Psoas muscle (tissue), 8 donors: ENCODE measurements at regions of chr4 and their contacts with region 1.

Region 1: DNA sequence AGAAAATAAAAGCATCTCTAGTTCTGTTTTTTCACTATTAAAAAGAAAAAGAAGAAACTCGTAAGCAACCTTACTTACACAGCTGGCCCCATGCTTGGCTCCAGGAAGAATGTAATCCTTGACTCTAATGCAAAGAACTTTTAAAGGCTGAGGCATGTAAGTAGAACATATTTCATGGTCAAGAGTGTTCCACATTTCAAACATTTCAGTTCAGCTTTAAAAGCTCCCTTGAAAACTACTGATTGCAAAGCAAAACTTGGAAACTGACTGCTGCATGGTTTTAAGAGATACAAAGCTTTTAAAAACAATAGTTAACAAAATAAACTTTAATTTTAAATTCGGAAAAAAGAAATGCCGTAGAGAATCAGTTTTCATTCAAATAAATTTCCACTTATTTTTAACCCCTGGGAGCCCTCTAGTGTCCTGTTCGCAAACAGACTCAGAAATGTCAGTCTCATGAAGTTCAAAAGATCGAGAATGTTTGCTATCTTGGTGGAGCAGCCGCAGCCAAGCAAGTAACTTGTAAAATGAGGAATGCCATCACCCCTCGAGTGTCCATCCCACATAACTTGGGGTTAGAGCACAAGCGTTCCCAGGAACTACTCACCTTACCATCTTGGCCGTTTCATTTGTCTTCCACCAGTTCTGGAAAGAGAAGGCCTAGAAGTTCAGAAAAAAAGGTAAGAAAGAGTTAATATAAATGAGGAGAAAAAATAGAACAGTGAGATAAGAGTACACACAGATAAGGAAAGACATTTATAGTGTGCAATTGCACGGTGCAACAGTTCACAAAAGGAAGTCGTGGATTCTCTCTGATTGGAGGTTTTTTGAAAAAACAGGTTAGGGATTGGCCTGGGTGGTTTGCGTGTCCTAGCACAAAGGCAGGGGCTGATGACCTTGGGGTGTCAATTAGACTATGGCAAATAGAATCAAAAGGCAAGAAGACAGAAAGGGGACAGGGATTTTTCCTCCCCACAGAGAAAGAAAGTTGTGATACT is at the start of gene GASK1B:
- DNase-seq: no peak
- ATAC-seq: peak in 1 of 4 donors; percentile 52
- H3K4me3 ChIP-seq: peak within 1 kb of the TSS; percentile 65
- H3K27ac ChIP-seq: peak within 1 kb of the TSS; percentile 56
- H3K4me1 ChIP-seq: peaks cover 12% of the 10 kb centered on the region
- H3K27me3 ChIP-seq: peaks cover 0 to 4% (median 0%) of the 10 kb centered on the region in 3 donors
- CTCF ChIP-seq: peak; percentile 59
- total RNA-seq, gene GASK1B: 5.3 to 16.7 (median 8.0) TPM

Region 2: DNA sequence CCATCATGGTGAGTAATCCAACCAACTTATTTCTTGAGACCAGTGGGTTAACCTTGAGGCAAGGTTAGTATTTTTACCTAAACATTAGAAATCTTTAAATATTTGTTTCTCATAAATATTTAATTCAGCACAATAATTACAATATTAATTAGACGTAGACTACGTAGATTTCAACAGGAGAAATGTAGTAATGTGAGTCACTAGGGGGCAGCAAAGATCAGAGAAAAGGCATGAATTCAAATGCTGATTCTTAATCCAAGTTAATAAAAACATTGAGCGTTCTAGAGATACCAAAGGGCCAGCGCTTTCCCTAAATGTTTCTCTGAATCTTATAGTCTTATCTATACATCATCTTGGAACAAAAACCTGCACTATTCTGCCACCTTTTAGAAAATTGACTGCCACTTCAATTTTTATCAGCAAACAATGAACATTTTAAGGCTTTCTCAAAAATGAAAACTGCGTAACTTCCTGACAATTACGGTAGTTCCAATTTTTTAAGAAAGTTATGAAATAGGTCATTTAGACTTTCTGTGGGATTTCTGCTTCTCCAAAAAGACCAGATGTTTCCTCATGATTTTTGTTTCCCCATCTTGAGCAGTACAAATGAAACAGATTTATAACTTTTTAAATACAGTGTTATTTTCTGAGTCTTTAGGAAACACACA is 180.4 kb before region 1 on chr4:
- intact Hi-C with region 1: loop called (anchors 2 to 5 kb)
- DNase-seq: no peak
- ATAC-seq: peak in 3 of 4 donors; percentile 40 to 78 (median 59)
- H3K4me3 ChIP-seq: peak overlapping the region; percentile 49
- H3K27ac ChIP-seq: peak overlapping the region; percentile 39
- H3K4me1 ChIP-seq: no peaks in the 10 kb centered on the region
- H3K27me3 ChIP-seq: no peaks in the 10 kb centered on the region
- CTCF ChIP-seq: peak; percentile 69

Region 3: GRCh38 chr4:158006990-158007389 is 165.6 kb before region 1 on chr4:
- intact Hi-C with region 1: loop called in 1 of 2 experiments (anchors 5 kb)
- DNase-seq: no peak
- ATAC-seq: peak in 2 of 4 donors; percentile 19 to 54
- H3K4me3 ChIP-seq: no peak overlapping the region
- H3K27ac ChIP-seq: no peak overlapping the region
- H3K4me1 ChIP-seq: peaks cover 6% of the 10 kb centered on the region
- H3K27me3 ChIP-seq: no peaks in the 10 kb centered on the region
- CTCF ChIP-seq: no peak

Region 4: GRCh38 chr4:158139086-158139485 is 33.5 kb before region 1 on chr4:
- intact Hi-C with region 1: no loop called
- DNase-seq: no peak
- ATAC-seq: no peak
- H3K4me3 ChIP-seq: no peak overlapping the region
- H3K27ac ChIP-seq: no peak overlapping the region
- H3K4me1 ChIP-seq: no peaks in the 10 kb centered on the region
- H3K27me3 ChIP-seq: no peaks in the 10 kb centered on the region
- CTCF ChIP-seq: no peak

Region 5: DNA sequence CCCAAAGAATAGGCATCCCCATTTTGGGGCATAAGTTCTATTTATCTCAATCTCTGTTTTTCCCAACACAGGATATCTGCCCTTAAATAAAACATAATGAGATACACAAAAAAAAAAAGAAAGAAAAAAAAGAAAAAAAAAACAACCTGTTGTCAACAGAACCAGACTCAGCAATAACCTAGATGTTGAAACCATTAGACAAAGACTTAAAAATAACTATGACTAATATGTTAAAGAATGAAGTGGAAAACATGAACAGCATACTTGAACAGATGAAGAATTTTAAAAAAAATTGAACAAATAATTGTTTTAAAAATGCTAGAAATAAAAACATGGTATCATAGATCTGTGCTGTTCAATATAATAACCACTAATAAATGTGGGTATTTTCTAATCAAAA is 255.7 kb after region 1 on chr4:
- intact Hi-C with region 1: no loop called
- DNase-seq: no peak
- ATAC-seq: no peak
- H3K4me3 ChIP-seq: no peak overlapping the region
- H3K27ac ChIP-seq: no peak overlapping the region
- H3K4me1 ChIP-seq: no peaks in the 10 kb centered on the region
- H3K27me3 ChIP-seq: no peaks in the 10 kb centered on the region
- CTCF ChIP-seq: no peak

Region 6: GRCh38 chr4:158817562-158818296 is 645.2 kb after region 1 on chr4:
- intact Hi-C with region 1: no loop called
- DNase-seq: no peak
- ATAC-seq: no peak
- H3K4me3 ChIP-seq: no peak overlapping the region
- H3K27ac ChIP-seq: peak overlapping the region; percentile 85
- H3K4me1 ChIP-seq: peaks cover 53% of the 10 kb centered on the region
- H3K27me3 ChIP-seq: no peaks in the 10 kb centered on the region
- CTCF ChIP-seq: no peak